Natural killer cell (primary cell): ENCODE measurements at regions of chr1 and their contacts with region 1.

Region 1: DNA sequence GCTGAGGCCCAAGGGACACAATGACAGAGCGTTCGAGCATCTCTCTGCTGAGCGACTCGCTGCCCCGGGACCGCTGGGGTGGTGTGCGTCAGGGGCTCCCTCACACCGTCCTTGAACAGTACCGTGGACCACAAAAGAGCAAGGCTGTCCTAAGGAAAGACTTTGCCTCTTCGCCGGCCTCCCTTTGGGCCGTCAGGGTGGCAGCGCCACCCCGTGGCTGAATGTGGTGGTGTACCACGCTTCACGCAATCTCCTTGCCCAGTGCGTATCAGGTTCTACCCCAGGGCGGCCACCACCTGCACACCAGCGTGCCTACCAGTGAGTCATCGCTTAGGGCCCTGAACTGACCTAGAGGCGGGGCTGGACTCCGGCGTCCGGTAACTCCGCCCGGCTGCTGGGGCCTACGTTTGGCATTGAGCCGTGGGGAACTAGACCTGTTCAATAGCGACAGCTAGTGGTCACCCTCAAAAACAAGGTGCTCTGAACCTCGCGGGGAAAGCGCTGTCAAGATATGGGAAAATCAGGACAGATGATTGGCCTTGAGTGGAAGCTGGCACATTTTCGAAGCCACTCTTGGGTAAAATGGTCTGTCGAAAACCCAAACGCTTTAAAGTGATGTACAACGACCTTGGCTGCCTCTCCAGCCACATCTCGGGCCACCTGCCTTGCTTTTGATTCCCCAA is 8.1 kb upstream of the TRAF3IP3 start:
- DNase-seq: peak; percentile 87 to 88
- ATAC-seq: peak; percentile 96 to 98 (median 98)
- H3K4me3 ChIP-seq: peak overlapping the region; percentile 27
- H3K4me3 Mint-ChIP-seq: peak overlapping the region; percentile 86
- H3K27ac ChIP-seq: peak overlapping the region; percentile 68
- H3K27ac Mint-ChIP-seq: peak overlapping the region; percentile 85 to 92
- H3K4me1 ChIP-seq: peaks cover 28% of the 10 kb centered on the region
- H3K4me1 Mint-ChIP-seq: peaks cover 24 to 26% of the 10 kb centered on the region in 2 donors
- H3K27me3 ChIP-seq: no peaks in the 10 kb centered on the region
- H3K27me3 Mint-ChIP-seq: no peaks in the 10 kb centered on the region
- CTCF ChIP-seq: peak; percentile 94

Region 2: DNA sequence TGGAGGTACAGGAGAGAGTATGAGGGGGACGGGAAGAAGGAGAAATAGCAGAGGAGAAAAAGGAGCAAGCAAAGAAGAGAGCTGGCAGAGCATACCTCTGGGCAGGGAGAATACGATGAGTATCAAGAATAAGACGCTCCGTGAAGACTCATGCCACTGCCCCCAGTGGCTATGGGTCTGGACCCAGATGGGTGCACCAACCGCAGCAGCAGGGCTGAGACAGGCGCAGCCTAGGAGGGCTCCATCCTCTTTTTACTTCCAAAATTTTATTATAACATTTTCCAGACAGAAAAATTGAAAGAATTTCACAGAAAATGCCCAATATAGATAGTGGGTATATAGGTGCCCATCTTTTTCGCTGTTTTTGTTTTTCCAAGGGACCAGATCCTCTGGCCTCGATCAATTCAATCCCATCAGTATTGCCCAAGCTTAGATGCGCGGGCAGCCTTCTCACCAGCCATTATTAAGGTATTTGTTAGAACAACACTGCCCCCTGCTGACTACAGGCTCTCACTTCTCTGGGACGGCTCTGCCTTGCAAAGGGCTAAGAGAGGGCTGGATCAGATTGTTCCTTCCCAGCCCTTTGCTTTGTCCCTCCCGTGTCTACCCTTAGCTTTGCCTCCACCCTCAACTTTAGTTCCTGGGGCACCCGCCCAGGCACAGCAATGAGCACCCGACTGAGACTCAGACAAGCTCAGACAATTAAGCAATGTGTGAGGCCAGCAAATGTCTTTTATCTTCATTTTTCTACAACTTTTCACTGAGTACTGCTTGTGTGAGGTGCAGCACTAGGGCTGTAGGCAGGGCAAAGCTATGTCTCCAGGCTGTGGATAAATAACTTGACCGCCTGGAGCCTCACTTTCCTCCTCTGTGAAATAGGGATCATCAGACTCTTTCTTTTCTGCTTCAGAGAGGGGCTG is 181.7 kb before region 1 on chr1:
- intact Hi-C with region 1: loop called (anchors 1 kb)
- DNase-seq: peak; percentile 45 to 85
- ATAC-seq: peak; percentile 81 to 91 (median 88)
- H3K4me3 ChIP-seq: no peak overlapping the region
- H3K4me3 Mint-ChIP-seq: no peak overlapping the region
- H3K27ac ChIP-seq: no peak overlapping the region
- H3K27ac Mint-ChIP-seq: no peak overlapping the region
- H3K4me1 ChIP-seq: no peaks in the 10 kb centered on the region
- H3K4me1 Mint-ChIP-seq: peaks cover 6 to 7% of the 10 kb centered on the region in 2 donors
- H3K27me3 ChIP-seq: no peaks in the 10 kb centered on the region
- H3K27me3 Mint-ChIP-seq: peaks cover 27 to 32% of the 10 kb centered on the region in 2 donors
- CTCF ChIP-seq: peak; percentile 70

Region 3: DNA sequence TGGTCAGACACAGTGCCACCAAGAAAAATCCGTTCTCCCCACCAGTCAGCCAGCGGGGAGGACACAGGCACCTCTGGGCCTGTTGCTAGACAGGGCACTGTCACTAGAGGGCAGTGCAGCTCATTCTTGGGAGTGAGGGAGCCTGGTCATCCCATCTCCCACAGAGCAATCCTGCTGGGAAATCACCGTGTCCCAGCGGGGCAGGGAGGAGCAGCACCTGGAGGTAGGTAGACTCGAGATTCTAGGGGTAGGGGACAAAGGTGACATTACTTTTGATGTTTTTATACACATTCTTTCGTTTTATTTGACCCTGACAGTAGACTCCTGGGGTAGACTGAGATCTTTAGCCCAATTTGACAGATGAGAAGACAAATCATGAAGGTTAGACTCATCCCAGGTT is 170.9 kb before region 1 on chr1:
- intact Hi-C with region 1: loop called (anchors 2 kb)
- DNase-seq: peak; percentile 51 to 75
- ATAC-seq: peak; percentile 73 to 91 (median 78)
- H3K4me3 ChIP-seq: no peak overlapping the region
- H3K4me3 Mint-ChIP-seq: no peak overlapping the region
- H3K27ac ChIP-seq: no peak overlapping the region
- H3K27ac Mint-ChIP-seq: no peak overlapping the region
- H3K4me1 ChIP-seq: no peaks in the 10 kb centered on the region
- H3K4me1 Mint-ChIP-seq: no peaks in the 10 kb centered on the region
- H3K27me3 ChIP-seq: peaks cover 9% of the 10 kb centered on the region
- H3K27me3 Mint-ChIP-seq: peaks cover 11 to 15% of the 10 kb centered on the region in 2 donors
- CTCF ChIP-seq: peak; percentile 86

Region 4: DNA sequence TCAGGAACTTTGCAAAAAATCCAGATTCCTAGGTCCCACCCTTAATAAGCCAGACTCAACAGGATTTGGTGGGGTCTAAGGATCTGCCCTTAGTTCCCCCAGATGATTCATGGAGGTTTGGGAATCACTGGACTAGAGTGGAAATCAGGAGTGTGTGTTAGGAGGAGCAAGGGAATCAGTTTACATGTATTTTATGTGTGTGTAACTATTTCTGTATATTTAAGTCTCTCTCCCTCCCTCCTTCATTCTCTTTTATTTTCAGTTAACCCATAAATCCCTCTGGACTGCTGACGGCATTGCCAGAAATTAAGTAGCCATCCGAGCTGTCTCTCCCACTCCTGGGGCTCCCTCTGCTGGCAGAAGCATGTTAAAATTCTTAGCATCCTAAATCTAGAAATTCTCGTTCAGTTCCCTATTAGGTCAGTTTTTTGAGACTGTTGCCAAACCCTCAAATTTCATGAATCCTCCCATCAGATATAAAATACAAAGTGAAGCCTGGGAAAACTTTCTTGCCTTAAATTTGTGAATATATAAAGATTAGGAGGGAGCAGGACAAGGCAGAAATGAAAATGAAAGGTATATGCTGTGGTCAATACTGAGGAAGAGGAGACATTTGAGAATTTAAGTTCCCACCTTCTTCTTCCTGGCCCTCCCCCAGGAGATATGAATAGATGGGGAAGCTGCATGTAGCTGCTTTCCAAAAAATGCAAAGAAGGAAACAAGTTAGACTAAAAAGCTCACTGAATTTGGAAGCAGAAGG is 54.8 kb before region 1 on chr1:
- intact Hi-C with region 1: loop called (anchors 5 kb)
- DNase-seq: peak; percentile 39 to 81
- ATAC-seq: peak; percentile 63 to 65 (median 64)
- H3K4me3 ChIP-seq: no peak overlapping the region
- H3K4me3 Mint-ChIP-seq: no peak overlapping the region
- H3K27ac ChIP-seq: no peak overlapping the region
- H3K27ac Mint-ChIP-seq: no peak overlapping the region
- H3K4me1 ChIP-seq: no peaks in the 10 kb centered on the region
- H3K4me1 Mint-ChIP-seq: peaks cover 9 to 11% of the 10 kb centered on the region in 2 donors
- H3K27me3 ChIP-seq: no peaks in the 10 kb centered on the region
- H3K27me3 Mint-ChIP-seq: peaks cover 0 to 5% of the 10 kb centered on the region in 2 donors
- CTCF ChIP-seq: peak; percentile 86

Region 5: GRCh38 chr1:209769171-209769904 is 21.6 kb after region 1 on chr1:
- intact Hi-C with region 1: loop called (anchors 1 kb)
- DNase-seq: peak; percentile 51 to 83
- ATAC-seq: peak; percentile 75 to 83 (median 76)
- H3K4me3 ChIP-seq: peak overlapping the region; percentile 66
- H3K4me3 Mint-ChIP-seq: no peak overlapping the region
- H3K27ac ChIP-seq: peak overlapping the region; percentile 69
- H3K27ac Mint-ChIP-seq: no peak overlapping the region
- H3K4me1 ChIP-seq: peaks cover 53% of the 10 kb centered on the region
- H3K4me1 Mint-ChIP-seq: peaks cover 44 to 47% of the 10 kb centered on the region in 2 donors
- H3K27me3 ChIP-seq: no peaks in the 10 kb centered on the region
- H3K27me3 Mint-ChIP-seq: no peaks in the 10 kb centered on the region
- CTCF ChIP-seq: no peak

Region 6: DNA sequence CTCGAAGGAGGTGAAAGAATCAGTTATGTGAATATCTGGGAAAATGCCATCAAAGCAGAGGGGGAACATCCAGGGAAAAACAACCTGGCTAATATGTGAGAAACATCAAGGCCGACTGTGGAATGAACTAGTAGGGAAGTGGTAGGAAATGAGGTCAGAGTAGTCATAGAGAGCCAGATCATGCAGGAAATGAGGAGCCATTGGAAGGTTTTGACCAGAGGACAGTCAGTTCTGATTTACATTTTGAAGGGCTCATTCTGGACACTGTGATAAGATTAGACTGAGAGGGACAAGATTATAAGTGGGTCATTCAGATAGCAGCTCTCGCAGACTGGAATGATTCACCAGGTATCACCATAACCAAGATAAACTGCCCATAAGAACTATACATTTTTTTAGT is 254.0 kb after region 1 on chr1:
- intact Hi-C with region 1: no loop called
- DNase-seq: no peak
- ATAC-seq: no peak
- H3K4me3 ChIP-seq: no peak overlapping the region
- H3K4me3 Mint-ChIP-seq: no peak overlapping the region
- H3K27ac ChIP-seq: no peak overlapping the region
- H3K27ac Mint-ChIP-seq: no peak overlapping the region
- H3K4me1 ChIP-seq: no peaks in the 10 kb centered on the region
- H3K4me1 Mint-ChIP-seq: no peaks in the 10 kb centered on the region
- H3K27me3 ChIP-seq: no peaks in the 10 kb centered on the region
- H3K27me3 Mint-ChIP-seq: peaks cover 0 to 4% of the 10 kb centered on the region in 2 donors
- CTCF ChIP-seq: no peak